ENCODE measurements at regions of chr2 and their contacts with region 1.

Region 1: GRCh38 chr2:152632736-152633135 is 84.5 kb downstream of the PRPF40A start:
- DNase-seq: no peak
- ATAC-seq: no peak
- H3K4me3 ChIP-seq: no peak overlapping the region
- H3K27ac ChIP-seq: no peak overlapping the region
- H3K4me1 ChIP-seq: no peaks in the 10 kb centered on the region
- H3K27me3 ChIP-seq: no peaks in the 10 kb centered on the region
- CTCF ChIP-seq: no peak

Region 2: DNA sequence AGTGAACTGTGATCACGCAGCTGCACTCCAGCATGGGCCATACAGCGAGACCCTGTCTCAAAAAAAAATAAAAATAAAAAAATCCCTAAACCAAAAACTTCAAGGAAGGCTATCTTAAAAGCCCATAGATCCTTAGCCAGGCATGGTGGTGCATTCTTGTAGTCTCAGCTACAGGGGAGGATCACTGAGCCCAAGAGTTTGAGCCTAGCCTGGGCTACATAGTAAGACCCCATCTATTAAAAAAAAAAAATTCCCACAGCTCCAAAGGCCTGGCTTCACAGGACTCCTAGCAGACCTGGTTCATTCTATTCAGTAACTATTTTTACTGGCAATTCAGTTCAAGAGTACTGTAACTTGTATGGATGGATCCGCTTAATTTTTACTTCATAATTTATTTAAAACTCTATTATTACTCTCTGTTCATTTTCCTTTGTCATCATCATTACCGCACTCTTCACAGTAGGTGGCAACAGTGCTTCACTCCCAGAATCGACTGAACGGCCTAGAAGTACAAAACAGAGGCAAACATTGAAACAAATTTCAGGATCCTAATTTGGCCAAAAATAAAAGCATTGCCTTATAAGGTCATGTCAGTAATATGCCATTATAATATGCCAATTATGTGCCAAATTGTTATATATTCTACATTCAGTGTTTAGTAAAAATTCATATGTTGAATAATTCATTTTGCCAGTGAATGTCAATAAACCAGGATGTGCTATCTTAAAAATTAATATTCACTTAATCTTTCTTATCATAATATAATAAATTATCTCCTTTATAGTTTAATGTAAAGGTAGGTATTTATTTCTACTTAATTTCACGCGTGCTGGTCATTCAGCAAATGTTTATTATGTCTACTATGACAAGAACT is 442.9 kb before region 1 on chr2:
- intact Hi-C with region 1: loop called (anchors 5 kb)
- DNase-seq: no peak
- ATAC-seq: peak; percentile 92
- H3K4me3 ChIP-seq: no peak overlapping the region
- H3K27ac ChIP-seq: no peak overlapping the region
- H3K4me1 ChIP-seq: no peaks in the 10 kb centered on the region
- H3K27me3 ChIP-seq: no peaks in the 10 kb centered on the region
- CTCF ChIP-seq: peak; percentile 82

Region 3: DNA sequence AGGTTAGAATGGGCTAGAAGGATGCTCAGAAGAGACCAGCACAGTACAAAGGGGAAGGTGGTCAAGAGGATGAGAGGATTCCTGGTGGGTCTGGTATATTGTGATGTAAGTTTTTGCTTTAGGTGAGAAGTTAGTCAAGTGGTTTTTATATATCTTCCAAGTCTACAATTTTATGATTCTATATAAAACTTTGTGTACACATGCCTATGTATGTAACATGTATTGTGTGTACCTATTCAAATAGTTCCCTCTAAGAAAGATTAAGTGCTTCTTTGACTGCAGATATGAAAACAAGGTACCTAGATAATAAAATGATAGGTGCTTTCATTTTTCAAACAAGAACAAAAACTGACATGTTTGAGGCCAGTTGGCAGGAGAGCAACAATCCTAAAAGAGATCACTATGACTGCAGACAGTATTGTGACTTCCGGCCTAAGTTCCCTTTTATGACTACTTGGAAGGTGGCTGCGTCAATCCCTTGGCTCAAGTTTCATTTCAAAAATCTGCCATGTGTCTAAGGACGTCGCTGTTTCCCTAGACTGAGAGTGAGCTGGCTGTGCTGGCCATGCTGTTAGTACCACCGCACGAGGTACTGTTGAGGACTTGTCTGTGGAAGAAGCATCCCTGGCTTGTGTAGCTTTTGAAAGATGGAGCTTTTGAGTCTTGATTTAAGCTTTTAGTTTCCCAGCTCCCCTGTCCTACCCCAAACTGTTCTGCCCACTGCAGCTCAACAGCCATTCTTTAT is 38.5 kb before region 1 on chr2:
- intact Hi-C with region 1: no loop called
- DNase-seq: no peak
- ATAC-seq: peak; percentile 89
- H3K4me3 ChIP-seq: no peak overlapping the region
- H3K27ac ChIP-seq: no peak overlapping the region
- H3K4me1 ChIP-seq: no peaks in the 10 kb centered on the region
- H3K27me3 ChIP-seq: no peaks in the 10 kb centered on the region
- CTCF ChIP-seq: no peak

Measured in upper lobe of right lung (tissue), 1 donor.